ENCODE measurements at regions of chr14 and their contacts with region 1.

Region 1: DNA sequence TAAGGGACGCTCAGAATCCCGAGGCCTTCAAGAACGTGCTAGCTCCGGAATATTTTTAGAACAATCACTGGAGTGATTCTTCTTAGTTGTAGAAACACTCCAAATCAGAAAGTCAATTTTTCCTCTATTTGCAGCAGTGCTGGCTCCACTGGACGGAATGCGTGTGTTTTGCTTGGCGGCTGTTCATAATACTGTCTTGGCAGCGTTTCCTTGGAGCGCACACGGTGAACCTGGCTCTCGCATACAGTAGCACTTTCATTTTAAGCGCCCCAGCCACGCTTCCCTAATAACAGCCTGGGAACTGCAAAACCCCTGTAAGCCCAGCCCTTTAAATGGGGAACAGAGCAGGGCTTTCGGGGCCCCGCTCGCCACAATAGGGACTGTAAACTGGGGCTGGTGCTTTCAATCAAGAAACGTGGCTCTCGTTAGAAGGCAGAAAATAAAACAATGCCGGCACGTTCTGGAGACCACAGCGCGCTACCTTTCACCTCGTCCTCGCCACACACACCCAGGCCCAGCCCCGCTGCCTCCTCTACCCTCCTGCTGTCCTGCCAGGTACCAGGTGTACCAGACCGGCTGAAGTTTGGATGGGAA is 79.9 kb downstream of the BCL11B start:
- DNase-seq: peak in 5 of 14 experiments; percentile 40 to 72 (median 64)
- ATAC-seq: peak; percentile 40
- H3K4me3 ChIP-seq: peak overlapping the region; percentile 59
- H3K4me3 Mint-ChIP-seq: peak overlapping the region; percentile 89
- H3K27ac ChIP-seq: peak overlapping the region; percentile 77 to 81
- H3K27ac Mint-ChIP-seq: peak overlapping the region; percentile 95
- H3K4me1 ChIP-seq: peaks cover 99% of the 10 kb centered on the region
- H3K4me1 Mint-ChIP-seq: peaks cover 97% of the 10 kb centered on the region
- H3K27me3 ChIP-seq: no peaks in the 10 kb centered on the region
- H3K27me3 Mint-ChIP-seq: no peaks in the 10 kb centered on the region
- CTCF ChIP-seq: no peak

Region 2: DNA sequence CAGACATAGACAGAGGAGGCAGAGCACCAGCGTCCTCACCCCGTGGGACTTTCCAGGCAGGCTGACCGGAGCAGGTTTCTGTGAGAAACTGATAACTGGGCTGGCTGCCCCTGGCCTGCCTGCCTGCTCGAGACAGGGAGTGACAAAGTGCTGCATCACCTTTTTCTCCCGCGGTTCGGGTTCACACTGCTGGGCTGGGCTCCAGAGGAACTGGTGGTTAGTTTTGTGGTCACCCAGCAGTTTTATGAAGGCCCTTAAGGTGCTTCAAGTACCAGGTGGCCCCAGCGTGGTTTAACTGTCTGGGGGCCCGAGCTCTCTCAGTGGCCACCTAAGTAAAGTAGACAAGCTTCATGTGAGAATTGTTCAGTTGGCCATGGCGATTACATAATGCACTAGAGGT is 993.7 kb before region 1 on chr14:
- CTCF ChIA-PET with region 1: interaction called, 3 read pairs
- POLR2A ChIA-PET with region 1: interaction called, 3 read pairs
- intact Hi-C with region 1: loop called (anchors 10 kb)
- DNase-seq: peak in 7 of 14 experiments; percentile 35 to 79 (median 61)
- ATAC-seq: peak; percentile 32
- H3K4me3 ChIP-seq: peak overlapping the region; percentile 22
- H3K4me3 Mint-ChIP-seq: peak overlapping the region; percentile 36
- H3K27ac ChIP-seq: peak overlapping the region; percentile 13 to 54
- H3K27ac Mint-ChIP-seq: peak overlapping the region; percentile 93
- H3K4me1 ChIP-seq: peaks cover 72% of the 10 kb centered on the region
- H3K4me1 Mint-ChIP-seq: peaks cover 96% of the 10 kb centered on the region
- H3K27me3 ChIP-seq: no peaks in the 10 kb centered on the region
- H3K27me3 Mint-ChIP-seq: no peaks in the 10 kb centered on the region
- CTCF ChIP-seq: no peak

Region 3: DNA sequence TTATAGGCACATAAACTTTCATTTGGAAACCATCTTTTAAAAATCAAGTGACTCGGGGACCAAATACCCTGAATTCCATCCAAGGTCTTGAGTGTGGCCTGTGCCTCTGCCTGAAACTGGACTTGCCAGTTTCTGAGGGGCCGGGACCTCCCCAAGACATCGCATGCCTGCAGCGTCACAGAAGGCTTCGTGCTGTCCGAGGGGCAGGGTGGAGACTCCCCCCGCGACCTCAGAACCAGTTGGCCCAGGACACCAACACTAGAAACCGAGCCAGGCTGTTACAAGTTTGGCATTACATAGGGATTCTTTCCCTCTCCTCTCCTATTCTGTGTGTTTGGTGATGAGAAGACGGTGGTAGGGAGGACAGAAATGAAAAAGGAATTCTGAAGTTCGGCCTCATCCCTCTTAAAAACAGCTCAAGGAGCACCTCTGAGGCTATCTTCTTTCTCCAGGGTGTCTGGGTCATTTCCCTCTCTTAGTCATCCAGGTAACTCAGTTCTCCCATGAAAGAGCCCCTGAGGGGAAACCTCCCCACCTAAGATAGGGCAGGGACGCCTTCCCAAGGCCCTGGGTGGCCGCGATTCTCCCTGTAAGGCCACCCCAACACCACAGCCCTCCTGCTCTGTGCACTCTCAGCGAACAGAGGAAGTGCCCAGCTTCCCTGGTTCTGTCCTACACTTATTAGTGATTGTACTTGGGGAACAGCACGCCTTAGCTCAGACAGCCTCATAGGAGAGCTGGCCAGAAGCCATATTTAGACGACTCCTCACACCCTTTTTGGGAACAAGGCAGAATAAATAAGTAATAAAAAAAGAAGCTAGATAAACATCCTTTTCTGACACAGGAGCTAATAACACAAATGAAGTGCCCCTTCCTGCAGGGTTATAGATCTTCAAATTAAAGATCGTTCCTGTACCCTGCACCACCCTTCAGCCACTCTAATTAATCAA is 14.0 kb before region 1 on chr14:
- CTCF ChIA-PET with region 1: interaction called, 9 read pairs
- POLR2A ChIA-PET with region 1: interaction called, 23 read pairs
- intact Hi-C with region 1: loop called in 1 of 2 experiments (anchors 1 kb)
- DNase-seq: peak in 2 of 14 experiments; percentile 0 to 9
- ATAC-seq: no peak
- H3K4me3 ChIP-seq: no peak overlapping the region
- H3K4me3 Mint-ChIP-seq: peak overlapping the region; percentile 39
- H3K27ac ChIP-seq: peak overlapping the region; percentile 37 to 80
- H3K27ac Mint-ChIP-seq: peak overlapping the region; percentile 95
- H3K4me1 ChIP-seq: peaks cover 56% of the 10 kb centered on the region
- H3K4me1 Mint-ChIP-seq: peaks cover 75% of the 10 kb centered on the region
- H3K27me3 ChIP-seq: no peaks in the 10 kb centered on the region
- H3K27me3 Mint-ChIP-seq: no peaks in the 10 kb centered on the region
- CTCF ChIP-seq: no peak

Region 4: GRCh38 chr14:99207496-99207895 is 15.4 kb after region 1 on chr14:
- CTCF ChIA-PET with region 1: interaction called, 9 read pairs
- POLR2A ChIA-PET with region 1: interaction called, 4,389 read pairs
- intact Hi-C with region 1: loop called in 1 of 2 experiments (anchors 2 kb)
- DNase-seq: no peak
- ATAC-seq: no peak
- H3K4me3 ChIP-seq: no peak overlapping the region
- H3K4me3 Mint-ChIP-seq: peak overlapping the region; percentile 89
- H3K27ac ChIP-seq: peak overlapping the region; percentile 59 to 74
- H3K27ac Mint-ChIP-seq: peak overlapping the region; percentile 95
- H3K4me1 ChIP-seq: peaks cover 99% of the 10 kb centered on the region
- H3K4me1 Mint-ChIP-seq: peaks cover 100% of the 10 kb centered on the region
- H3K27me3 ChIP-seq: no peaks in the 10 kb centered on the region
- H3K27me3 Mint-ChIP-seq: no peaks in the 10 kb centered on the region
- CTCF ChIP-seq: no peak

Region 5: GRCh38 chr14:99215277-99215676 is 23.2 kb after region 1 on chr14:
- CTCF ChIA-PET with region 1: interaction called, 4 read pairs
- POLR2A ChIA-PET with region 1: interaction called, 4,389 read pairs
- intact Hi-C with region 1: loop called in 1 of 2 experiments (anchors 2 kb)
- DNase-seq: no peak
- ATAC-seq: no peak
- H3K4me3 ChIP-seq: peak overlapping the region; percentile 39
- H3K4me3 Mint-ChIP-seq: peak overlapping the region; percentile 84
- H3K27ac ChIP-seq: peak overlapping the region; percentile 25 to 71
- H3K27ac Mint-ChIP-seq: peak overlapping the region; percentile 95
- H3K4me1 ChIP-seq: peaks cover 99% of the 10 kb centered on the region
- H3K4me1 Mint-ChIP-seq: peaks cover 99% of the 10 kb centered on the region
- H3K27me3 ChIP-seq: no peaks in the 10 kb centered on the region
- H3K27me3 Mint-ChIP-seq: no peaks in the 10 kb centered on the region
- CTCF ChIP-seq: no peak

Region 6: DNA sequence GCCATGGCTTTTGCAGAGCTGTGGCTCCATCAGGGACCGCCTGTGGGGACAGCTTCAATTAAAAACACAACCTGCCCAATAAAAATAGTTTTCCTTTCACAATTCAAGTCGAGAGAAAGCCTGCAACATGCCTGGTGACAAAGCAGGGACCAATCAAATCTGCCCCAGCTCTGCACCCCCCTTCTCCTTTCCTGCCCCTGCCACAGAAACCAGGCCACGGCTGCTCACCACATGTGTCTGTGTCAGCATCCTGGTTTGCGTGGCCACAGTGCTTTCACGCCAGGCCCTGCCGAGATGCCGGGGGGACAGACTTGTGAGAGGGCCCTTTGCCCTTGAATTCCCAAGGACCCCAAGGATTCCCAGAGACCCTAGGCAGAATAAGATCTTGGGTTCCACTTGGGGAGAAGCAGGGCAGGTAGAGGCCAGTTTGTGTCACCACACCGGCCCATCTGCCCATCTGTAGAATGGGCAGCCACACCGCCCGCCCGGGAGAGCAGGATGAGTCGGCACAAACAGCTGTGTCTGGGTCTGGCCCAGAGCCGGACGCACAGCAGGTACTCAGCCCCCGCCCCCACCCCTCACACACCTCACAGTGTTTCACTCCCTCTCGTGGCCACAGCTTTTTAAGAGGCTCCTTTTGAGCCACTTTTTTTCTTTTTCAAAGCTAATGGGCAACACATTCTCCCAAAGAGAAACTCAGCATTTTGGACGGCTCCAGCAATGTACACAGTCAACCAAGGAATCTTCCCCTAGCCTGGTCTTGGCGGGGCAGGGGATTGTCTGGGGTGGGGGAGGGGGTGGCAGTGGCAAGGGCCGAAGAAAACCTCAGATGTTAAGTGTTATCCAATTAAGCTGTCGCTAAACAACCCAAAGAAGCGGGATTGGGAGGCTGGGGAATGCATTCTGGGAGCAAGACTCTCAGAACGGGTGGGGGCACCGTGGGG is 38.4 kb after region 1 on chr14:
- CTCF ChIA-PET with region 1: interaction called, 11 read pairs
- POLR2A ChIA-PET with region 1: interaction called, 4,389 read pairs
- intact Hi-C with region 1: loop called in 1 of 2 experiments (anchors 5 kb)
- DNase-seq: peak; percentile 62 to 95 (median 80)
- ATAC-seq: peak; percentile 60
- H3K4me3 ChIP-seq: peak overlapping the region; percentile 28
- H3K4me3 Mint-ChIP-seq: peak overlapping the region; percentile 90
- H3K27ac ChIP-seq: peak overlapping the region; percentile 95 to 97
- H3K27ac Mint-ChIP-seq: peak overlapping the region; percentile 95
- H3K4me1 ChIP-seq: peaks cover 100% of the 10 kb centered on the region
- H3K4me1 Mint-ChIP-seq: peaks cover 96% of the 10 kb centered on the region
- H3K27me3 ChIP-seq: no peaks in the 10 kb centered on the region
- H3K27me3 Mint-ChIP-seq: no peaks in the 10 kb centered on the region
- CTCF ChIP-seq: peak; percentile 46

Region 7: DNA sequence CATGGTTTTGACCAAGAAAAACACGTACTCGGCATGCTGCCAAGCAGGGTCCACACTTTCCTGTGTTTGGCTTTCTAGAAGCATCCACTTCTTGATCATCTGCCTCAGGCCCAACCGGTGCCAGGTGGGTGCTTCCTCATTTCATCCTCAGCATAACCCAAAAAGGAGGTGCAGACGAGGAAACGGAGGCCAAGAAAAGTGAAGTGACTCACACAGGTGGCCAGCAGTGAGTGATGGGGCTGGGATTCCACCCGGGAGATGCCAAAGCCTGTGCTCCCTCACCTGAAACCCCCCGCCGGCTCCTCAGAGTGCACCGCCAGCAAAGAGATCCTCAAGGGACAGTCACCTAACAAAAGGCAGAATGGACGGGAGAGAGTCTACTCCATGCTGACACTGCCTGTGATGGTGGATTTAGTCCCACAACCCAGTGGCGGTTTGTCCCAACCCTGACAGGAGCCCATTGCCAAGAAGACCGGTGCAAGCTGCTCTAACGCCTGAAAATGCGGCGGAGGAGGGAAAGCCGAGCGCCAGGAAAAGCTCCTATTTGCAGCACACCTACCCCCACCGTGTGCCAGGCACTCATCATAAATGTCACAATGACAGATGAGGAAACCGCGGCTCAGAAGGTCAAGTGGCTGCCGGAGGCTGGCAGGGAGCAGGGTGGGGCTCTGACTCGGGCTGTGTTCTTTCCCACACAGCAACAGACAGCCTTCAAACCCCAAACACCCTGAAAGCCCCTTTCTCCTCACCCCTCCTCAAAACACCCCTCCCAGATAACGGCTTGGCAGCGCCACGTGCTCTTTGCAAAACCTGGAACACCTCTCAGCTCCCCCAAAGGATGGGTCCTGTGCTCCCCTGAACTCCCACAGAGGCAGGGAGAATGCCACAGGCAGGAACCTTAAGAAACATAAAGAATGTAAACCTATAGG is 61.1 kb after region 1 on chr14:
- CTCF ChIA-PET with region 1: interaction called, 3 read pairs
- POLR2A ChIA-PET with region 1: interaction called, 4,389 read pairs
- intact Hi-C with region 1: loop called in 1 of 2 experiments (anchors 2 kb)
- DNase-seq: peak in 11 of 14 experiments; percentile 55 to 87 (median 71)
- ATAC-seq: peak; percentile 48
- H3K4me3 ChIP-seq: peak overlapping the region; percentile 33
- H3K4me3 Mint-ChIP-seq: peak overlapping the region; percentile 83
- H3K27ac ChIP-seq: peak overlapping the region; percentile 95 to 97
- H3K27ac Mint-ChIP-seq: peak overlapping the region; percentile 99
- H3K4me1 ChIP-seq: peaks cover 100% of the 10 kb centered on the region
- H3K4me1 Mint-ChIP-seq: peaks cover 97% of the 10 kb centered on the region
- H3K27me3 ChIP-seq: no peaks in the 10 kb centered on the region
- H3K27me3 Mint-ChIP-seq: no peaks in the 10 kb centered on the region
- CTCF ChIP-seq: no peak

Region 8: GRCh38 chr14:99729991-99730868 is 538.1 kb after region 1 on chr14:
- CTCF ChIA-PET with region 1: no interaction called
- POLR2A ChIA-PET with region 1: no interaction called
- intact Hi-C with region 1: no loop called
- DNase-seq: peak; percentile 39 to 76 (median 64)
- ATAC-seq: peak; percentile 94
- H3K4me3 ChIP-seq: no peak overlapping the region
- H3K4me3 Mint-ChIP-seq: no peak overlapping the region
- H3K27ac ChIP-seq: no peak overlapping the region
- H3K27ac Mint-ChIP-seq: no peak overlapping the region
- H3K4me1 ChIP-seq: no peaks in the 10 kb centered on the region
- H3K4me1 Mint-ChIP-seq: no peaks in the 10 kb centered on the region
- H3K27me3 ChIP-seq: peaks cover 31 to 42% of the 10 kb centered on the region in 2 experiments
- H3K27me3 Mint-ChIP-seq: peaks cover 45% of the 10 kb centered on the region
- CTCF ChIP-seq: peak; percentile 62

Measured in CD4-positive, alpha-beta T cell (primary cell).